Gastrocnemius medialis (tissue), 4 donors: ENCODE measurements at regions of chr20 and their contacts with region 1.

Region 1: GRCh38 chr20:22684072-22684762 is 99.8 kb upstream of the FOXA2 start:
- DNase-seq: peak in 1 of 2 donors; percentile 42
- ATAC-seq: peak; percentile 80 to 84
- H3K4me3 ChIP-seq: no peak overlapping the region
- H3K27ac ChIP-seq: no peak overlapping the region
- H3K4me1 ChIP-seq: no peaks in the 10 kb centered on the region
- H3K27me3 ChIP-seq: no peaks in the 10 kb centered on the region
- CTCF ChIP-seq: peak; percentile 69 to 83 (median 81)
- POLR2A ChIP-seq: no peak

Region 2: GRCh38 chr20:22333885-22334545 is 350.2 kb before region 1 on chr20:
- in situ Hi-C with region 1: loop called (anchors 5 to 10 kb)
- intact Hi-C with region 1: loop called (anchors 1 kb)
- DNase-seq: peak; percentile 25 to 27
- ATAC-seq: peak; percentile 82 to 83
- H3K4me3 ChIP-seq: no peak overlapping the region
- H3K27ac ChIP-seq: no peak overlapping the region
- H3K4me1 ChIP-seq: no peaks in the 10 kb centered on the region
- H3K27me3 ChIP-seq: peaks cover 0 to 8% (median 0%) of the 10 kb centered on the region in 3 donors
- CTCF ChIP-seq: peak; percentile 48 to 76 (median 58)
- POLR2A ChIP-seq: no peak

Region 3: DNA sequence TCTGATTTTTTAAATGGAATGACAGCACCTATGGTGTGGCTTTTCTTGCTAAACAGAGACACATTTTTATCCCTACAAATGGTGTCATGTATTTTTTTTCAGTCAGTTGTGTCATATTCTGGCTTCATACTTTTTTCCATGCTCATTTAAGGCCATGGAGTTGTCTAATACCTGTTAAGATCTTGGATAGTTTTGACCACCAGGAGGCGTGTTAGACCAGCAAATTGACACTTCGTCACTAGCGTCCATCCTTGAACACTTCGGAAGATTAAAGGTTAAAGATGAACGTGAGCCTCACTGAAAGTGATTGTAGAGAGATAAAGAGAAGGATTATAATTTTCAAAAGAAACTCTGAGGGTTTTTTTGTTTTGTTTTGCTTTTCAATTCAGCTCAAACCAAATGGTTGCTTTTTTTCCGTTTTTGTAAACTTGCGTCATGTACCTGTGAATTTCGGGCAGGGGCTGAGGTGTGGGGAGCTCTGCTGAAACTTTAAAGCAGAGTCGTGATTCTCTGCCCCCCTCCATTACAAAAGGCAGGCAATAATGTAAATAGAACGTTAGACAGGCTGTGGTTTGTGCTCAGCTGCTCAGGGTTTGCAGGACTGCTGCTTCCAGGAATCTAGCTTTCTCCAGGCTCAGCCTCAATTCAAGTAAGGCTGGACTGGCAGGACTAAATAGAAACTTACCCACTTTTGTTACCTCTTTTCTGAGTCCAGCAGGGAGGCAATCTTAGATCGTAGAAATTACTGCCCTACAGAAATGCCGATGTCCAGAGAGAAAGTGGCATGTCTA is 344.9 kb before region 1 on chr20:
- in situ Hi-C with region 1: loop called (anchors 5 to 10 kb)
- intact Hi-C with region 1: loop called (anchors 1 kb)
- DNase-seq: no peak
- ATAC-seq: peak; percentile 55 to 61
- H3K4me3 ChIP-seq: no peak overlapping the region
- H3K27ac ChIP-seq: no peak overlapping the region
- H3K4me1 ChIP-seq: no peaks in the 10 kb centered on the region
- H3K27me3 ChIP-seq: no peaks in the 10 kb centered on the region
- CTCF ChIP-seq: peak; percentile 65 to 77 (median 73)
- POLR2A ChIP-seq: no peak

Region 4: DNA sequence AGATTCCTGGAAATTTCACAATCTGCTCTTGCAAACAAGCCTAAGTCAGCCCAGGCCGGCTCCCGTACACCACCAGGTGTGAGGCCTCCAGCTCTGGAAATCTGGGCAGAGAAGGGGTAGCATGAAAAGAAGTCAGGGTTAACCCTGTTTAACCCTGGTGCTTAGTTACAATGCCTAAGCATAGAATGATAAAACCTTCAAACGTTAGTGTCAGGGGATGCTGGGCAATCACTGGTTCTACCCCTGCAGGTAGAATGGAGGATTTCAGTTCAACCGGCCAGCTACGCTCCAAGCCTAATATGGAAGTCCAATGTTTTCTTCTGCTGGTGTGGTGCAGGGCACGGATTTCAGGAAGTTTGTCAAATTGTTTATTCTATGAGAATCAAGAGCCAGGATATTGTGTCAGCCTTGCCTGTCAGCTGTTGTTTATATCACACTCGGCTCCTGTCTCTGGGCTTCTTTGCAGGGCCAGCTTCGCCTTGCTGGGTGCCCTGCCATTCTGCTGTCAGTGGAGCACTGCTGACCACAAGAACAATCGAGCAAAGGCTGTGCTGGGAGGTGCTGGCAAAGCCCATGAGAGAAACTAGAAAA is 422.1 kb after region 1 on chr20:
- in situ Hi-C with region 1: no loop called
- intact Hi-C with region 1: no loop called
- DNase-seq: peak; percentile 34 to 39
- ATAC-seq: peak; percentile 69 to 78
- H3K4me3 ChIP-seq: no peak overlapping the region
- H3K27ac ChIP-seq: peak overlapping the region; percentile 57 to 76 (median 69)
- H3K4me1 ChIP-seq: peaks cover 8 to 40% of the 10 kb centered on the region in 2 donors
- H3K27me3 ChIP-seq: no peaks in the 10 kb centered on the region
- CTCF ChIP-seq: peak in 4 of 5 experiments; percentile 16 to 37 (median 30)
- POLR2A ChIP-seq: peak; percentile 33 to 49